Dendritic cell treated with granulocyte-macrophage colony-stimulating factor and Interleukin-4, amounts not matched to agents 40 ng/mL and 50 ng/mL, for 4 days (primary cell): ENCODE measurements at regions of chr17 and their contacts with region 1.

Region 1: GRCh38 chr17:49407981-49408501 is 6.6 kb downstream of the PHB1 start:
- H3K4me3 Mint-ChIP-seq: no peak overlapping the region
- H3K27ac Mint-ChIP-seq: no peak overlapping the region
- H3K4me1 Mint-ChIP-seq: peaks cover 30% of the 10 kb centered on the region
- H3K27me3 Mint-ChIP-seq: no peaks in the 10 kb centered on the region

Region 2: GRCh38 chr17:49486012-49486641 is 78.1 kb after region 1 on chr17:
- intact Hi-C with region 1: no loop called
- H3K4me3 Mint-ChIP-seq: peak overlapping the region; percentile 18
- H3K27ac Mint-ChIP-seq: no peak overlapping the region
- H3K4me1 Mint-ChIP-seq: peaks cover 51% of the 10 kb centered on the region
- H3K27me3 Mint-ChIP-seq: peaks cover 86% of the 10 kb centered on the region

Region 3: DNA sequence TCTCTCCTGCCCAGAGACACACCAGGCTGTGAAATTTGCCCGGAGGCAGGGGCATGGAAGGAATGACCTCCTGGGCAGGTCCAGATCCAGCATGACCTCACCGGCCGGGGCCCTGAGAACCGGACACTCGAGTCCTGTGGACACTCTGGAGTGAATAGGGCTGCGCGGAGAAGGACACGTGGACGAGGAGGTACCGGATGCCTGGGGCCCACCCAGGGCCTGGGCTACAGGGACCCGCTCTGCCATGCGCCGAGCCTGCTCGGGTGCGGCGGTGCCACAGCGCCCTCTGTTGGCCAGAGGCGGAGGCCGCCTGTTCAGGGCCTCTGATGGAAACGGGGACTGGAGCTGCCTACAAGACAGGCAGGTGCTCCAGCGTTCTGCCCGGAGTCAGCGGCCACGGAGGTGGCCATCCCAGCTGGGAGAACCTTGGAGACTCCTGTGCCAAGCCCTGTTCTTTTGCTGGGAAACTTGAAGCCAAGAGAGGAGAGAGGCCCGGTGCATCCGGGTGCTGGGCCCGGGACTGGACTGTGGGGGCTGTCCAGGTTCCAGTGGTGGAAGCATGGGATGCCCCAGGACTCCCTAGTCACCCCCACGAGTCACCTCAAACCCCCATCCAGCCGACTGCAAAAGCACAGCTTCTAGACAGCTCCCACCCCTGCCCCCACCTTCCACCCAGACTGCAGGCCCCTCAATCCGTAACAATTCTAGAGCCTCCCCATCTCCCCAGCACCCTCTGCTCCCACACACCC is 148.4 kb after region 1 on chr17:
- intact Hi-C with region 1: loop called (anchors 1 kb)
- H3K4me3 Mint-ChIP-seq: no peak overlapping the region
- H3K27ac Mint-ChIP-seq: no peak overlapping the region
- H3K4me1 Mint-ChIP-seq: peaks cover 22% of the 10 kb centered on the region
- H3K27me3 Mint-ChIP-seq: peaks cover 25% of the 10 kb centered on the region